Posterior vena cava (tissue), 2 donors: ENCODE measurements at regions of chr9 and their contacts with region 1.

Region 1: GRCh38 chr9:112174218-112174964 is 706 bp downstream of the SUSD1 start:
- DNase-seq: peak; percentile 92

Region 2: DNA sequence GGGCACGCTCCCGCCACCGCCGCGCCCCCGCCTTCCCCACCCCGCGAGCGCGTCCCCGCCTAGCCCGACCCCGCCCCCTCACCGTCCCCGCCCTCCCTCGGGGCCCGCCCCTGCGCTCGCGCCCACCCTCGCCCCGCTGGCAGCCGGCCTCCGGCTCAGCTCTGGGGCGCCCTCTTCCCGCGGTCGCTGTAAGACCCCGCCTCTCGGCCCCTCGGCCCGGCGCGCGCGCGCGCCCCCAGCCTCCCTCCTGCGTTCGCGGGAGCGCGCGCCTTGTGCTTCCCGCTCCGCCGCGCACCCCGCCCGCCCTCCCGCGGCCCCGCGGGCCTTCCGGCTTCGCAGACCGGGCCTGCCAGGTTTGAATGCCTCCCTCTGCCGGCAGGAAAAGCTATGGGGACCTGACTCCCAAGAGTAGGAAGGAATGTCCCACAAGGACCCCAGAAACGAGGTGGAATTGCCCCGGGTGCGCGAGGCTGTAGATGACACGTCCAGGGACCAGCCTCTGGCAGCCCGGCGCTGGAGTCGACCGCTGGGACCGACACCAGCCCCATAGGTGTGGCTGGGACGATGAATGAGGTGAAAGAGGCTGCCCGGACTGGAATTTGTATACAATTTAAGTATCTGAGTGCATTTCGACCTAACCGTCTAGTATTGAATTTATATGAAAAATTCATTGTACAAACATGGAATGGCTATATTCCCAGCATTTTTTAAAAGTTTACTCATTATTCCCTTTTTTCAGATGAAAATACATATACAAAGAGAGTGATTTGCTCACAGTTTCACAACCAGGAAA is 159.4 kb after region 1 on chr9:
- intact Hi-C with region 1: loop called in 1 of 2 experiments (anchors 10 kb)
- DNase-seq: peak; percentile 98